Caco-2 (cell line): ENCODE measurements at regions of chr3 and their contacts with region 1.

Region 1: GRCh38 chr3:57221883-57222282 is 5.6 kb upstream of the APPL1 start:
- DNase-seq: no peak
- H3K4me3 ChIP-seq: no peak overlapping the region
- H3K4me3 Mint-ChIP-seq: no peak overlapping the region
- H3K27ac Mint-ChIP-seq: no peak overlapping the region
- H3K4me1 ChIP-seq: peaks cover 7% of the 10 kb centered on the region; the same call in 1 of the 2 replicates
- H3K4me1 Mint-ChIP-seq: peaks cover 12% of the 10 kb centered on the region
- H3K27me3 ChIP-seq: no peaks in the 10 kb centered on the region
- H3K27me3 Mint-ChIP-seq: no peaks in the 10 kb centered on the region
- CTCF ChIP-seq: peak; percentile 25 to 49

Region 2: DNA sequence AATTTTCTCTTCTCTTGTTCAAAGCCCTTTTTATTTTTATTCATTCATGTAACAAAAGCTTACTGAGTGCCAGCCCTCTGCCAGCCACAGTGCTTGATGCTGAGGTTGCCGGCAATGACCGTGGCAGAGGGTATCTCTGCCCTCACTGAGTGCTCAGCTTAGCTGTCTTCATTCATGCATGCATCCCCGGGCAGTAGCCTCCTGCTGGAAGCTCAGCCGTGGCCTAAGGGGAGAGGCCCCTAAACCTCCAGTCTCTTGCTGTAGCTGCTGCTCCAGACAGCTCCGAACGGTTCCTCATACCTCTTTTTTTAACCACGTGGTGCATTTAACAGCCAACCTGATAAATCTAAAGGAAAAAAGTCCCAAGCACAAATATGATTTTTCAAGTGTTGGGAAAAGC is 699.5 kb before region 1 on chr3:
- CTCF ChIA-PET with region 1: no interaction called
- POLR2A ChIA-PET with region 1: no interaction called
- intact Hi-C with region 1: no loop called
- DNase-seq: no peak
- H3K4me3 ChIP-seq: no peak overlapping the region
- H3K4me3 Mint-ChIP-seq: no peak overlapping the region
- H3K27ac Mint-ChIP-seq: no peak overlapping the region
- H3K4me1 ChIP-seq: peaks cover 4% of the 10 kb centered on the region; the same call in 1 of the 2 replicates
- H3K4me1 Mint-ChIP-seq: no peaks in the 10 kb centered on the region
- H3K27me3 ChIP-seq: no peaks in the 10 kb centered on the region
- H3K27me3 Mint-ChIP-seq: peaks cover 14% of the 10 kb centered on the region
- CTCF ChIP-seq: no peak

Region 3: GRCh38 chr3:57100046-57100695 is 121.7 kb before region 1 on chr3:
- CTCF ChIA-PET with region 1: interaction called, 3 read pairs
- POLR2A ChIA-PET with region 1: no interaction called
- intact Hi-C with region 1: loop called (anchors 1 kb)
- DNase-seq: peak; percentile 61 to 81
- H3K4me3 ChIP-seq: no peak overlapping the region
- H3K4me3 Mint-ChIP-seq: no peak overlapping the region
- H3K27ac Mint-ChIP-seq: no peak overlapping the region
- H3K4me1 ChIP-seq: 0 out of 2 replicates have a peak, but pooled peaks cover 7% of the 10 kb centered on the region
- H3K4me1 Mint-ChIP-seq: peaks cover 10% of the 10 kb centered on the region
- H3K27me3 ChIP-seq: no peaks in the 10 kb centered on the region
- H3K27me3 Mint-ChIP-seq: no peaks in the 10 kb centered on the region
- CTCF ChIP-seq: peak; percentile 65 to 89

Region 4: DNA sequence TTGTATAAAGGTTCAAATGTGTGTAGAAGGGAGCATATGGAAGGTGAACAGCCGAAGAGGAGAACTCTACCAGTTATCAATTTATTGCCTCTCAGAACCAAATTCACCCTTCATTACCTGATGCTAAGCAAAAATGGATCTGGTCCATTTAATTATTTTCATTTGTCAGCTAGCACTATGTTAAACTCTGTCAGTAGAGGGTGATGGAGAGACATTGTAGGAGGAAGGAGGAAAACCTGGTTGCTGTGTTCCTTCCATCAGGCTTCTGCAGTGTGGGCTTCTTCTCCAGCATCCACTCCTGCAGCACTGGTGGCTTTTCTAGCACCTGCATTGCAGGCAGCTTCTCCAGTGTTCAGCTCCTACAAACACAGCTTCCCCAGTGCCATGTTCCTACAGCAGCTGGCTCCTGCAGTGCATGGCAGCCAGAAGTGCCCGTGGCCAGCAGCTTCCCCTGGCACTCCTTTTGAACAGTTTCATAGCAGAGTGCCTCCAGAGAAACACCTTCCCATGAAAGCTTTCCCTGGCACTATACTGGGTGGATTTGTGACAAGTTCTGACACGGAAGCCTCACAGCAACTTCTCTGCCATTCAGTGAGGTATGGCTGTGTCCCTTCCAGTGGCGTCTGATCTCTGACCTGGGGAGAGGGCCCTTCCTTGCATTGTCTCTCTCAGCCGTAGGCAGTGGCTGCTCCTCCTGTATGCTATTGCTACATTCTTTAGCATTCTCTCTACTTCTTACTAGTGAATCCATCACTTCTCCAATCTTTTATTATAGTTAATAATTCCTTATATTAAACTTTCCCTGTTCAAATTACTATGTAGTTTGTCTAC is 42.1 kb before region 1 on chr3:
- CTCF ChIA-PET with region 1: interaction called, 6 read pairs
- POLR2A ChIA-PET with region 1: no interaction called
- intact Hi-C with region 1: loop called (anchors 1 kb)
- DNase-seq: peak in 1 of 2 experiments; percentile 36
- H3K4me3 ChIP-seq: no peak overlapping the region
- H3K4me3 Mint-ChIP-seq: no peak overlapping the region
- H3K27ac Mint-ChIP-seq: no peak overlapping the region
- H3K4me1 ChIP-seq: no peaks in the 10 kb centered on the region
- H3K4me1 Mint-ChIP-seq: no peaks in the 10 kb centered on the region
- H3K27me3 ChIP-seq: no peaks in the 10 kb centered on the region
- H3K27me3 Mint-ChIP-seq: peaks cover 3% of the 10 kb centered on the region
- CTCF ChIP-seq: peak; percentile 50 to 55

Region 5: GRCh38 chr3:57256844-57257243 is 35.0 kb after region 1 on chr3:
- CTCF ChIA-PET with region 1: no interaction called
- POLR2A ChIA-PET with region 1: no interaction called
- intact Hi-C with region 1: no loop called
- DNase-seq: no peak
- H3K4me3 ChIP-seq: no peak overlapping the region
- H3K4me3 Mint-ChIP-seq: no peak overlapping the region
- H3K27ac Mint-ChIP-seq: no peak overlapping the region
- H3K4me1 ChIP-seq: no peaks in the 10 kb centered on the region
- H3K4me1 Mint-ChIP-seq: peaks cover 5% of the 10 kb centered on the region
- H3K27me3 ChIP-seq: no peaks in the 10 kb centered on the region
- H3K27me3 Mint-ChIP-seq: no peaks in the 10 kb centered on the region
- CTCF ChIP-seq: no peak

Region 6: DNA sequence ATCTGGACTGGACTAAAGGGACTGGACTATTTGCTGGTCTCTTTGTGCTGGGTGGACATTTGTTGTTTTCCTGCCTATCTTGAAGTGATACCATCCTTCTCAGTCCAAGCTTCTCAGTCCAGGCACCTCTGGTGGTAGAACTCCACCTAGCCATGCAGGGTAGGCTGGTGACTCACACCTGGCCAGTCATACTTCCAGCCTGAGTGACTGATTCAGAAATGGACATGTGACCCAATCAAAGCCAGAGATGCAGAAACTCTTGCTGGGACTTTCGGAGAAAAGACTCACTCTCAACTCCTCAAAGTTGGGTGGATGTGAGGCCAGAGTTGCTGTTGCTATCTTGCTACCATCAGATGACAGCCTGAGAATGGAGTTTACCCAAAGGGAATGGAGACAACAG is 76.2 kb after region 1 on chr3:
- CTCF ChIA-PET with region 1: no interaction called
- POLR2A ChIA-PET with region 1: no interaction called
- intact Hi-C with region 1: no loop called
- DNase-seq: peak in 1 of 2 experiments; percentile 10
- H3K4me3 ChIP-seq: no peak overlapping the region
- H3K4me3 Mint-ChIP-seq: no peak overlapping the region
- H3K27ac Mint-ChIP-seq: no peak overlapping the region
- H3K4me1 ChIP-seq: no peaks in the 10 kb centered on the region
- H3K4me1 Mint-ChIP-seq: no peaks in the 10 kb centered on the region
- H3K27me3 ChIP-seq: no peaks in the 10 kb centered on the region
- H3K27me3 Mint-ChIP-seq: no peaks in the 10 kb centered on the region
- CTCF ChIP-seq: no peak

Region 7: GRCh38 chr3:57793737-57794187 is 571.9 kb after region 1 on chr3:
- CTCF ChIA-PET with region 1: no interaction called
- POLR2A ChIA-PET with region 1: interaction called, 20 read pairs
- intact Hi-C with region 1: no loop called
- DNase-seq: no peak
- H3K4me3 ChIP-seq: no peak overlapping the region
- H3K4me3 Mint-ChIP-seq: no peak overlapping the region
- H3K27ac Mint-ChIP-seq: peak overlapping the region; percentile 4
- H3K4me1 ChIP-seq: peaks cover 33% of the 10 kb centered on the region
- H3K4me1 Mint-ChIP-seq: peaks cover 25% of the 10 kb centered on the region
- H3K27me3 ChIP-seq: no peaks in the 10 kb centered on the region
- H3K27me3 Mint-ChIP-seq: no peaks in the 10 kb centered on the region
- CTCF ChIP-seq: no peak